Aorta (tissue), 5 donors: ENCODE measurements at regions of chr12 and their contacts with region 1.

Region 1: DNA sequence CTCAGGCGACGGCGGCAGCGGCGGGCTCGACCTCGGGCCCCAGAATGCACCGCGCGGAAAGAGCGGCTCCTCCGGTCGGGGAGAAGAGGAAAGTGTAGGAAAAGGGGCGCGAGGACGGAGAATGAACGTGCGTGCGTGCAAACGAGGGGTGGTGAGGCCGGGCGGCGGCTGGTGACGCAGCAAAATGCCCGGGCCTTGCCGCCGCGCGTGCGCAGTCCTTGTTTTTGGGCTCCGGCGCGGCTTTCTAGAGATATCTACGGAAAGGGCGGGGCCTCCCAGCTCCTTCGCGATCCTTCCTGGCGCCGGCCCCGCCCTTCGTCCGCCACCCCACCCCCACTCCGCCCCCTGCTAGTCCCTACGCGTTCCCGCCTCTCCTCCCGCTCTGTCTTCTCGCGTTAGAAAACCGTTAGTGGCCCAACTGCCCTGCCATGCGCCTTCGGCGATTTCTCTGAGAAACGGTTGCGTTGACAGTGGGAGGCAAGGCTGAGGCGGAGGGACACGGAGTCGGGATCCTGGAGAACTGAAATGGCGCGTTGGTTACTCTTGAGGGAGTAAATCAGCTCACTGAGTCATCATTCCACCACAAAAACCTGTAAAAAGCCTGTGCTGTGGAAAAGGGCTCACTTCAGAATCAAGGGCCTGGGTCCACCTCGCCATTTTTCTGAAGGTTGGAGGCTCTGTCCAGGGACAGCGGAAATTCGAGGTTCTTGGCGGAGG is at the start of gene PTGES3:
- DNase-seq: peak; percentile 99
- ATAC-seq: peak; percentile 98
- H3K4me3 ChIP-seq: peak within 1 kb of the TSS; percentile 69 to 75
- H3K27ac ChIP-seq: peak within 1 kb of the TSS; percentile 77 to 83
- H3K4me1 ChIP-seq: no peaks in the 10 kb centered on the region
- H3K27me3 ChIP-seq: no peaks in the 10 kb centered on the region
- total RNA-seq, gene PTGES3: 148 to 153 TPM

Region 2: GRCh38 chr12:56630160-56630632 is 58.1 kb before region 1 on chr12 and contains the start of gene BAZ2A:
- intact Hi-C with region 1: no loop called
- DNase-seq: peak; percentile 92 to 97
- ATAC-seq: peak; percentile 94
- H3K4me3 ChIP-seq: peak within 1 kb of the TSS; percentile 84 to 97
- H3K27ac ChIP-seq: peak within 1 kb of the TSS in 1 of 2 donors; percentile 38
- H3K4me1 ChIP-seq: peaks cover 0 to 4% of the 10 kb centered on the region in 2 donors
- H3K27me3 ChIP-seq: no peaks in the 10 kb centered on the region
- total RNA-seq, gene BAZ2A: 89.3 to 130 TPM

Region 3: GRCh38 chr12:56645717-56646446 is 42.4 kb before region 1 on chr12 and contains the start of gene ATP5F1B:
- intact Hi-C with region 1: loop called in 1 of 2 experiments (anchors 1 kb)
- DNase-seq: peak; percentile 96 to 97
- ATAC-seq: peak; percentile 99
- H3K4me3 ChIP-seq: peak within 1 kb of the TSS; percentile 89 to 93
- H3K27ac ChIP-seq: peak within 1 kb of the TSS; percentile 29 to 97
- H3K4me1 ChIP-seq: peaks cover 0 to 4% of the 10 kb centered on the region in 2 donors
- H3K27me3 ChIP-seq: no peaks in the 10 kb centered on the region
- total RNA-seq, gene ATP5F1B: 216 to 262 TPM

Region 4: DNA sequence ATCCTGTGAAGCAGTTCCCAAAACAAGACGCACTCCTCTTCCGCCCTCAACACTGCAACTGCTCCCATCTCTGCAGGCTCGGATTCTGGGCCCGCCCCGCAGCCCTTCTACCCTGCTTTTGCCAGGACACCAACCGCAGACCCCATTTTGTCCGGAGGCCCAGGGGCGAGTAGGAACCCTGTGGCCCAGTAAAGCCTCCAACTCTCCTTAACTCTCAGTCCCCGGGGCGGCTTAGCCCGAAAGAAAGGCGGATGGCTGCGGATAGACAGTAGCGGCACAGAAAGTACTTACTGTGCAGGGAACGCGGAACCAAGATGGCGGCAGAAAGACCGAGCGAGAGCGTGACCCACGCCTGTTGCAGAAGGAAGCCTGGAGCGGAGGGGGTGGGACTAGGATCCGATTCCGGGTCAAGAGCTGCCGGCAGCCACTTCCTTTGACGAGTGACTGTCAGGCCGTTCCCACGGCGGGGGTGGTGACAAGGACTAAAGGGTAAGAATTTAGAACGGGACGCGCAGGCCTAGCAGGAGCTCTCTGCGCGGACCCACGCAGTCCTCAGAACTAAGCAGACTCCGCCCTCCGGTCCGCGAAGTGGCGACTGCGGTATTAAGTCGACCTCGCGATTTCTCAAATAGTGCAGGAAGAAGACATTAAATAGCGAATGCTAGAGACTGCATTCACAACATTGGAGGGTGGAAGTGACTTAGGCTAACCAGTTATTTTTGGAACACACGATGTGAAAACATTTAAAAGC is 36.9 kb after region 1 on chr12 and contains the start of gene NACA:
- intact Hi-C with region 1: loop called (anchors 1 to 2 kb)
- DNase-seq: peak; percentile 99 to 100
- ATAC-seq: peak; percentile 97
- H3K4me3 ChIP-seq: peak within 1 kb of the TSS; percentile 80 to 82
- H3K27ac ChIP-seq: peak within 1 kb of the TSS; percentile 69 to 88
- H3K4me1 ChIP-seq: peaks cover 0 to 6% of the 10 kb centered on the region in 2 donors
- H3K27me3 ChIP-seq: no peaks in the 10 kb centered on the region
- total RNA-seq, gene NACA: 575 to 674 TPM

Region 5: GRCh38 chr12:56775638-56776037 is 87.4 kb after region 1 on chr12:
- intact Hi-C with region 1: no loop called
- DNase-seq: no peak
- ATAC-seq: no peak
- H3K4me3 ChIP-seq: no peak overlapping the region
- H3K27ac ChIP-seq: no peak overlapping the region
- H3K4me1 ChIP-seq: no peaks in the 10 kb centered on the region
- H3K27me3 ChIP-seq: no peaks in the 10 kb centered on the region

Region 6: GRCh38 chr12:57088459-57089248 is 400.4 kb after region 1 on chr12 and contains the start of gene NAB2:
- intact Hi-C with region 1: loop called in 1 of 2 experiments (anchors 5 kb)
- DNase-seq: peak; percentile 98
- ATAC-seq: peak; percentile 87
- H3K4me3 ChIP-seq: peak within 1 kb of the TSS; percentile 73 to 92
- H3K27ac ChIP-seq: peak within 1 kb of the TSS; percentile 94
- H3K4me1 ChIP-seq: peaks cover 0 to 6% of the 10 kb centered on the region in 2 donors
- H3K27me3 ChIP-seq: no peaks in the 10 kb centered on the region
- total RNA-seq, gene NAB2: 31.6 to 48.4 TPM